ENCODE measurements at regions of chr3 and their contacts with region 1.

Region 1: GRCh38 chr3:190120269-190121060 is at the start of gene P3H2:
- DNase-seq: peak; percentile 87
- H3K4me3 ChIP-seq: peak within 1 kb of the TSS; percentile 82 to 89
- H3K27ac ChIP-seq: peak within 1 kb of the TSS; percentile 82 to 84
- H3K4me1 ChIP-seq: peaks cover 11% of the 10 kb centered on the region
- H3K27me3 ChIP-seq: no peaks in the 10 kb centered on the region
- CTCF ChIP-seq: peak; percentile 14 to 63 (median 48)
- POLR2A ChIP-seq: no peak
- total RNA-seq, gene P3H2: 20.6 to 82.8 TPM

Region 2: GRCh38 chr3:189937307-189938124 is 182.9 kb before region 1 on chr3:
- intact Hi-C with region 1: no loop called
- DNase-seq: no peak
- H3K4me3 ChIP-seq: no peak overlapping the region
- H3K27ac ChIP-seq: no peak overlapping the region
- H3K4me1 ChIP-seq: no peaks in the 10 kb centered on the region
- H3K27me3 ChIP-seq: no peaks in the 10 kb centered on the region
- CTCF ChIP-seq: no peak
- POLR2A ChIP-seq: no peak

Region 3: GRCh38 chr3:189974359-189974758 is 146.1 kb before region 1 on chr3:
- intact Hi-C with region 1: loop called (anchors 5 kb)
- DNase-seq: no peak
- H3K4me3 ChIP-seq: no peak overlapping the region
- H3K27ac ChIP-seq: no peak overlapping the region
- H3K4me1 ChIP-seq: no peaks in the 10 kb centered on the region
- H3K27me3 ChIP-seq: no peaks in the 10 kb centered on the region
- CTCF ChIP-seq: no peak
- POLR2A ChIP-seq: no peak

Region 4: GRCh38 chr3:190017521-190018288 is 102.8 kb before region 1 on chr3:
- intact Hi-C with region 1: loop called (anchors 5 kb)
- DNase-seq: peak; percentile 46
- H3K4me3 ChIP-seq: no peak overlapping the region
- H3K27ac ChIP-seq: no peak overlapping the region
- H3K4me1 ChIP-seq: peaks cover 6% of the 10 kb centered on the region
- H3K27me3 ChIP-seq: no peaks in the 10 kb centered on the region
- CTCF ChIP-seq: peak in 3 of 4 experiments; percentile 31 to 55 (median 54)
- POLR2A ChIP-seq: no peak